ENCODE measurements at regions of chr10 and their contacts with region 1.

Region 1: DNA sequence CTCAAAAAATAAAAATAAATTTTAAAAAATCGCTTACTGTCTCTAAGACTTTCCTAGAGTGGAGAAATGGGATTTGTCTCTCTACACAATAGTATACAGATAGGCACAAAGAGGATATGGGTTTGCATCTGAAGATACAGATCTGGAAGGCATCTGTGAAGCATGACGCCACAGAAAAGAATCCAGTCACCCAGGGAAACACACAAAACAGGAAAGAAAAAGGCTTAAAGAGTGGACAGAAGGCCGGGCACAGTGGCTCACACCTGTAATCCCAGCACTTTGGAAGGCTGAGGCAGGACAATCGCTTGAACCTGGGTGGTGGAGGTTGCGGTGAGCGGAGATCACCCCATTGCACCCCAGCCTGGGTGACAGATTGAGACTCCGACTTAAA is 61.3 kb downstream of the SKIDA1 start:
- DNase-seq: no peak
- ATAC-seq: no peak
- H3K4me3 ChIP-seq: no peak overlapping the region
- H3K27ac ChIP-seq: no peak overlapping the region
- H3K4me1 ChIP-seq: no peaks in the 10 kb centered on the region
- H3K27me3 ChIP-seq: no peaks in the 10 kb centered on the region
- CTCF ChIP-seq: no peak
- POLR2A ChIP-seq: no peak

Region 2: DNA sequence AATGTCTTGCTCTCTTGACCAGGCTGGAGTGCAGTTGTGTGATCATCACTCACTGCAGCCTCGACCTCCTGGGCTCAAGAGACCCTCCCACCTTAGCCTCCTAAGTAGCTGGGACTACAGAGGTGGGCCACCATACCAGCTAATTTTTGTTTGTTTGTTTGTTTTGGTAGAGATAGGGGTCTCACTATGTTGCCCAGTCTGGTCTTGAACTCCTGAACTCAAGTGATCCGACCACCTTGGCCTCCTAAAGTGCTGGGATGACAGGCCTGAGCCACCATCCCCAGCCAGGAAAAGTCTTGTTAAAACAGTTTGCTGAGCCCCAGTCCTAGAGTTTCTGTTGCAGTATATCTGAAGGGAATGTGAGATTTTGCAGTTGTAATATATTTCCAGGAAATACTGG is 22.5 kb before region 1 on chr10:
- intact Hi-C with region 1: loop called in 1 of 10 experiments (anchors 2 kb)
- DNase-seq: no peak
- ATAC-seq: no peak
- H3K4me3 ChIP-seq: no peak overlapping the region
- H3K27ac ChIP-seq: no peak overlapping the region
- H3K4me1 ChIP-seq: no peaks in the 10 kb centered on the region
- H3K27me3 ChIP-seq: no peaks in the 10 kb centered on the region
- CTCF ChIP-seq: no peak
- POLR2A ChIP-seq: no peak

Region 3: GRCh38 chr10:21495752-21496342 is 31.7 kb after region 1 on chr10:
- intact Hi-C with region 1: no loop called
- DNase-seq: peak; percentile 81 to 92 (median 86)
- ATAC-seq: peak; percentile 66 to 91 (median 82)
- H3K4me3 ChIP-seq: peak overlapping the region; percentile 61 to 86 (median 78)
- H3K27ac ChIP-seq: peak overlapping the region in 11 of 12 donors; percentile 68 to 91 (median 81)
- H3K4me1 ChIP-seq: peaks cover 0 to 31% (median 8%) of the 10 kb centered on the region in 12 donors
- H3K27me3 ChIP-seq: peaks cover 0 to 54% (median 0%) of the 10 kb centered on the region in 9 donors
- CTCF ChIP-seq: peak; percentile 96 to 100 (median 99)
- POLR2A ChIP-seq: no peak

Region 4: GRCh38 chr10:21754410-21755011 is 290.4 kb after region 1 on chr10:
- intact Hi-C with region 1: no loop called
- DNase-seq: no peak
- ATAC-seq: no peak
- H3K4me3 ChIP-seq: no peak overlapping the region
- H3K27ac ChIP-seq: no peak overlapping the region
- H3K4me1 ChIP-seq: peaks cover 0 to 10% (median 0%) of the 10 kb centered on the region in 12 donors
- H3K27me3 ChIP-seq: no peaks in the 10 kb centered on the region
- CTCF ChIP-seq: no peak
- POLR2A ChIP-seq: no peak

Measured in heart left ventricle (tissue), 16 donors.